ENCODE measurements at regions of chr9 and their contacts with region 1.

Region 1: DNA sequence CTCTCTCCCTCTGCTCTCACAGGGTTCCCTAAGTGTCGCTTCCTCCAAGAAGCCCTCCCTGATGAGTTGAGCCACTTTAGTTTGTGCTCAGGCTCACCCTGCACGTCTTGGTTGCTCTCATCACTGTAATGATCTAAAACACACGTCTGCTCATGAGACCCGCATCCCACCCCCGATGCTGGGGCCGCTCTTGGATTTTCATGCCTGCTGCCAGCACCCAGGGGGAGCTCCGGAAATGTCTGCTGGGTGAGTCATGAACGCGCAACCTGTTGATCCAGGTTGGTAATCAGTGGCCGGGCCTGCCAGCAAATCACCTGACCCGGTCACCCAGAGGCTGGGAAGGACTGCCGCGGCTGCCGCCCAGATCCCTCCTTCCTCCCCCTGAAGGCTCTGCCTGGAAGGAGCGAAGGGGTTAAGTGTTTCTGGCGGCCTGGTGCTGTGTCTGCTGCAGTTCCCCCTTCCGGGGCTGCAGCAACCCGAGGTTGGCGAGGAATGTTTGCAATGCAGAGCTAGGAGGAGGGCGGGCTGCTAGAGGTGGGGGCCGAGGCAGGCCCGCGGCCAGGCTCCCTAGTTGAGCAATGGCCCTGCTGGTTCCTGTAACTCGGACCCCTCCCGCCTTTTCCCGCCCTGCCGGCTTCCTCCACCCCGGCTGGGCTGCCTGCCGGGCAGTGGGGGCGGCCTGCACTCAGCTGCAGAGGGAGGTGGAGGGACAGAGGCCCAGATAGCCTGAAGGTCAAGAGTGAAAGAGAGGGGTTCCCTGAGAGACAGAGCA is 156.1 kb upstream of the IER5L start:
- DNase-seq: peak; percentile 96
- ATAC-seq: peak; percentile 90

Region 2: GRCh38 chr9:129413537-129414376 is 79.6 kb after region 1 on chr9:
- intact Hi-C with region 1: loop called (anchors 2 kb)
- DNase-seq: peak; percentile 100
- ATAC-seq: peak; percentile 89

Region 3: DNA sequence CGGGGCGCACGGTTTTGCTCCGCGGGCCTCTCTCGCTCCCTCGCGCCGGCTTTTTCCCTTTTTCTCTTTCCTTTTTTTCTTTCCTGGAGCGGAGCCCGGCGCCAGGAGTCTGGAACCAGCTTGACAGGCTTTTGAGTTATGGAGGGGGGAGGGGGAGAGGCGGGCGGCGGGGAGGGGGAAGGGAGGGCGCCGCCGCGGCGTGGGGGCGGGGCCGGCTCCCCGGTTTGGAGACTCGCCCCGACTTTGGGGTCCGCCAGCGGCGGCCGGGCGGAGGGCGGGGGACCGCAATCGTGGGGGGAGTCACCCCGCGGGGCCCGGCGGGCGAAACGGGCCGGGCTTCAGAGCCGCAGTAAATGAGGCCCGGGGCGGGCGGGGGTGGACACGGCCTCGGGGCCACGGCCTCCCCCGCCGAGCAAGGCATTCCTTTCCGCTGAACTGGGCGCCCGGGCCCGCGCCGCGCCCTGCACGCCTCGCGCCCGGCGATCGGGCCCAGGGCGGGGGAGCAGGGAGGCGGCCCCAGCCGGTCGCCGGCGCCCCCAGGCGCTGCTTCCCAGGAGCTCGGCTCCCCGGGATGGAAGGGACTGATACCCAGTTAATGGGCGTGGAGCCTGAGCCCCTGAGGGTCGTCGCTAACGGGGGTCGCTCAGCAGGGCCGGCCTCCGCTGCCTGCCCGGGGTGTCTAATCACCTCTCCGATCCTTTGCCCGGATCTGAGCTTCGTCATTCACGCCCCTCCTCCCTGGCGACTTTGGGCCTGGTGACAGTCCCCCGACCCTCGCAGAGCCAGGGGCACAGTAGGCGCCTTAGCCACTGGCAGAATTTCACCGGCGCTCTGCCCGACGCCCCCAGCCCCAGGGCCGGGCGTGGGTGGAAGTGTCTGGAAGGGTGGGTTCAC is 148.6 kb after region 1 on chr9:
- intact Hi-C with region 1: loop called (anchors 5 kb)
- DNase-seq: peak; percentile 91
- ATAC-seq: peak; percentile 74

Measured in Right ventricle myocardium superior (tissue), 1 donor.